ENCODE measurements at regions of chr2 and their contacts with region 1.

Region 1: DNA sequence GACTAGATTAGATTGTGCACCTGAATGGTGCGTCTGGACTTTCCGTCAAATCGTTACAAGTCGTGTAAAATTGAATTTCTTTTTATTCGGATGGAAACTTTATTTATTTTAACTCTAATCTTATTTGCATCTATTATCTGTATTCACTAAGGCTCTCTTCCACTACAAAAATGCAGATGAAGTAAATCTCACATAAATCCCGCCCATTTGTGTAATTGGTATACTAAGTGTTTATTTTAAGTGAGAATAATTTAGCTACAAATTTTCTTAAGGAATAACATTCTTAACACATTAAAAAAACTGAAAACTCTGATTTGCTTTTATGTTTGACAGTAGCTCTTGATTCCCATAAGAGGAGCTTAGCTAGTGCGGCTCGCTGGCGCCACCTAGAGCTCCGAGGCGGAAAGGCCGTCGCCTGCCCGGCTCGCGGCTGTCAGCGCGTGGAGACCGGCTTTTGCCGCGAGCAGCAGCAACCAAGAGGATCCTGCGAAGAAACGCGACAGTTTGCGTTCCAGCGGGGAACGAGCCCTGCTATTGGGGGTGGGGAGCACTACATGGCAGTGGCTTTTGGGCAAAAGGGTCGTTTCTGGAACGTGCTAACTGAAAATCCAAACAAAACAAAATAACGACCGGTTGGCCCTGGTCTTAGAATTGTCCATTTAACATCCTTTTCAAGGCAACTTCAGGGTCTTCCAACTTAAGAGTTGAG is 6.7 kb downstream of the SP9 start:
- DNase-seq: peak; percentile 73
- H3K4me3 ChIP-seq: peak overlapping the region; percentile 12 to 42 (median 16)
- H3K27ac ChIP-seq: no peak overlapping the region
- H3K4me1 ChIP-seq: peaks cover 39% of the 10 kb centered on the region
- H3K27me3 ChIP-seq: peaks cover 51% of the 10 kb centered on the region
- CTCF ChIP-seq: peak; percentile 96 to 99

Region 2: GRCh38 chr2:173571021-173571882 is 770.2 kb before region 1 on chr2:
- CTCF ChIA-PET with region 1: no interaction called
- dilution Hi-C with region 1: no loop called
- in situ Hi-C with region 1: no loop called
- intact Hi-C with region 1: loop called (anchors 5 kb)
- DNase-seq: peak; percentile 30
- H3K4me3 ChIP-seq: no peak overlapping the region
- H3K27ac ChIP-seq: no peak overlapping the region
- H3K4me1 ChIP-seq: peaks cover 28% of the 10 kb centered on the region
- H3K27me3 ChIP-seq: no peaks in the 10 kb centered on the region
- CTCF ChIP-seq: peak; percentile 31 to 52

Region 3: DNA sequence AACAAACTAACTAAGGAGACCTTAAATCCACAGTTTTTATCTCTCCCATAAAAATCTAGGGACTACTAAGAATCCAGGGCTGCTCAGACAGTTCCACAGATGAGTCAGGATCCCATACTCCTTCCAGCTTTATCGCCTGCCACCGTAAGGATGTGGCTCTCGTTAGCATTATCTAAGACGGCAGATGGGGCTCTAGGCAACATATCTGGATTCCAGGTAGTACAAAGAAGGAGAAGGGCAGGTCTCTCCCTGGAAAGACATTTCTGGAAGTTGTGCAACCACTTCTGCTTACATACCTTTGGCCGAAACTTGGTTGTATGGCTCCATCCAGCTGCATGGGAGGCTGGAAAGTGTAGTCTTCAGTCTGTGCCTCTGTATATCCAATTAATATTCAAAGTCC is 525.7 kb before region 1 on chr2:
- CTCF ChIA-PET with region 1: no interaction called
- dilution Hi-C with region 1: no loop called
- in situ Hi-C with region 1: no loop called
- intact Hi-C with region 1: loop called (anchors 5 kb)
- DNase-seq: peak; percentile 61
- H3K4me3 ChIP-seq: no peak overlapping the region
- H3K27ac ChIP-seq: no peak overlapping the region
- H3K4me1 ChIP-seq: no peaks in the 10 kb centered on the region
- H3K27me3 ChIP-seq: peaks cover 9% of the 10 kb centered on the region
- CTCF ChIP-seq: no peak

Region 4: DNA sequence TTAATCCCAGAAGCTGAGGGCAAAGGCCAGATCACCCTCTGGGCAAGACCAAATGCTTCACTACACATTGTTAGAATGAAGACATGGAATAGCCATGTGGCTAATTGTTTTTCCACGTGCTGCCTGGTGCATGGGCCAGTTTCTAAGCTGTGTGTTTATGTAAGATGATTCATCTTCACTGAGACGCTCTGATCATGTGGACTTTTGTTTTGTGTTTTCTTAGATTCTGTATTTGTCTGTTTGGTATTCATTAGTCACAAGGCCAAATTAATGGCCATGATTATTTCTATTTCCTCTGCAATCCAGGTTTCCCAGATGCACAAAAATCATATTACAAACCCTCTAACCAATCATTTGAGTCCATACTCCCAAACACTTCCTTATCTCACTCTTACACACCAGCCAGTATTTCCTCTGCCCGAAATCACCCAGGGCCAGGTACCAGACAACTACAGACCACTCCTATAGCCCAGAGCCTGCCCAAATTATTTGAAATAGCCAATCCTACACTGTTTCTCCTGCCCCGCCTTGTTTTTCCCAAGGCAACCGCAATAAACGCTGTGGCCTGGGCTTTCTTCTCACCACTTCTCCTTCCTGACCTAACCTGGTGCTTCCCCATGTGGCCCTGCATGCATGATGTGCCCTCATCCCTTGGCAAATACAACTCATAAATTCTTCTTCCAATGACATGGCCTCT is 282.1 kb before region 1 on chr2:
- CTCF ChIA-PET with region 1: no interaction called
- dilution Hi-C with region 1: no loop called
- in situ Hi-C with region 1: no loop called
- intact Hi-C with region 1: loop called (anchors 5 kb)
- DNase-seq: peak; percentile 78
- H3K4me3 ChIP-seq: no peak overlapping the region
- H3K27ac ChIP-seq: peak overlapping the region; percentile 47
- H3K4me1 ChIP-seq: peaks cover 23% of the 10 kb centered on the region
- H3K27me3 ChIP-seq: no peaks in the 10 kb centered on the region
- CTCF ChIP-seq: no peak

Region 5: GRCh38 chr2:174158003-174158402 is 183.4 kb before region 1 on chr2:
- CTCF ChIA-PET with region 1: interaction called, 4 read pairs
- dilution Hi-C with region 1: no loop called
- in situ Hi-C with region 1: loop called in 1 of 2 experiments (anchors 25 kb)
- intact Hi-C with region 1: loop called (anchors 1 kb)
- DNase-seq: peak; percentile 27
- H3K4me3 ChIP-seq: no peak overlapping the region
- H3K27ac ChIP-seq: no peak overlapping the region
- H3K4me1 ChIP-seq: peaks cover 29% of the 10 kb centered on the region
- H3K27me3 ChIP-seq: no peaks in the 10 kb centered on the region
- CTCF ChIP-seq: peak; percentile 68 to 70

Region 6: GRCh38 chr2:174282441-174282840 is 59.0 kb before region 1 on chr2:
- CTCF ChIA-PET with region 1: no interaction called
- dilution Hi-C with region 1: no loop called
- in situ Hi-C with region 1: no loop called
- intact Hi-C with region 1: no loop called
- DNase-seq: no peak
- H3K4me3 ChIP-seq: no peak overlapping the region
- H3K27ac ChIP-seq: no peak overlapping the region
- H3K4me1 ChIP-seq: no peaks in the 10 kb centered on the region
- H3K27me3 ChIP-seq: no peaks in the 10 kb centered on the region
- CTCF ChIP-seq: no peak